Keratinocyte (primary cell): ENCODE measurements at regions of chr1 and their contacts with region 1.

Region 1: DNA sequence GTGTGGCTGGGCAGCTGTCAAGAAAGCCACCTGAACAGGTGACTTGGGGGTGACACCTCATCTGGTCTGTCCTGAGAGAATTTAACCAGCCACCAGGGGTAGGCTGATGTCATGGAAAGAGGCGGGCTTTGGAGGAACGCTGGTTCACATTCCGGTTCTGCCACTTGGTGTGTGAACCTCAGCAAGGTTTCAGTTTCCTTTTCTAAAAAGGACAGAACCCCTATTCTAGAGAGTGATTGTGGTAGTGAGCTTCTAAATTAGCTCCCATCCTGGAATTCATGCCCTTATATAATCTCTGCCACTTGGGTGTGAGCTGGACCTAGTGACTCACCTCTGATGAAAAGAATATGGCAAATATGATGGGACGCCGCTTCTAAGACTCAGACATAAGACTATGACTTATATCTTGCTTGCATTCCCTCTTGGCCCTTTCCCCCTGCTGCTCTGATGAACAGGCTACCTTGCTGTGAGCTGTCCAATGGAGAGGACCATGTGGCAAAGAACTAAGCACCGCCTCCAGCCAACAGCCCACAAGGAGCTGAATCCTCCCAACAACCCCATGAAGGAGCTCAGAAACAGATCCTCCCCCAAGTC is 332.1 kb downstream of the RRAGC start:
- DNase-seq: peak; percentile 5
- H3K4me3 ChIP-seq: no peak overlapping the region
- H3K27ac ChIP-seq: no peak overlapping the region
- H3K4me1 ChIP-seq: peaks cover 5% of the 10 kb centered on the region
- H3K27me3 ChIP-seq: no peaks in the 10 kb centered on the region
- CTCF ChIP-seq: peak in 1 of 3 experiments; percentile 36

Region 2: DNA sequence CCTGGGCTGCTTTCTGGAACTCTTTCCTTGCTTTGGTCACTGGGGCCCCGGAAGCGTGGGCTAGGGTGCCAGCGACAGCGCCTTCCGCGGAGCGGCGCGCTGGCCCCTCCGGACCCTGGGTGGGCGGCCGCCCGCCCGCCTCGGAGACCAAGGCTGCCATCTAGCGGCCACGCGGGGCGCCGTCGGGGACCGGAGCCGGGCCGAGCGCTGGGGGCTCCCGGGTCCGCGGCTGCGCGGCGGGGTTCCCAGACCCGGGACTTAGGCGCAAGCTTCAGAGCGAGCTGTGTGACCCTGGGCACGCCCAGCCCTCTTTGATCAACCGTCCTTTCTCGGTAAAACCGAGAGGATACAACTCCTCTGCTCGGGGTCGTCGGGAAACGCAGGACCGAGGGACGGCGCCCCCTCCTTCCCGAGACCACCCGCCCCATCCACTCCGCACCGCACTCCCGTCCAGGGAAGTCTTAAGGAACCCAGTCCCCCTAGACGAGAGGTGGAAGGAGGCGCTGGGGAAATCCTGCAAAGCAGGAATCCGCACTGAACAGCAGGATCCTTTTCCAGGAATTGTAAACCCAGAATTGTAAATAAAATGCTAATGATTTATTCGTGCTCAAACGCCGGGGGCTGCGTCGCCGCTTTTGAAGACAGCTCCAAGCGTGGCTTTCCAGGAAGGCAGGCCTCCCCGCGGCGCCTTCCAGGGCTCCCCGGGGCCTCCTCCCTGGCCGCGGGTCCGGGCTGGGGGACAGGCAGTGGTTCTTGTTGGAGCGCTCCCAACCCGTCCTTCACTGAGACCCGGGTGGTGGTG is 290.9 kb after region 1 on chr1:
- dilution Hi-C with region 1: loop called (anchors 25 kb)
- DNase-seq: no peak
- H3K4me3 ChIP-seq: no peak overlapping the region
- H3K27ac ChIP-seq: no peak overlapping the region
- H3K4me1 ChIP-seq: no peaks in the 10 kb centered on the region
- H3K27me3 ChIP-seq: peaks cover 69% of the 10 kb centered on the region
- CTCF ChIP-seq: peak in 2 of 3 experiments; percentile 58 to 68